Activated CD4-positive, alpha-beta T cell treated with anti-CD3 and anti-CD28 coated beads for 36 hours (primary cell): ENCODE measurements at regions of chr10 and their contacts with region 1.

Region 1: DNA sequence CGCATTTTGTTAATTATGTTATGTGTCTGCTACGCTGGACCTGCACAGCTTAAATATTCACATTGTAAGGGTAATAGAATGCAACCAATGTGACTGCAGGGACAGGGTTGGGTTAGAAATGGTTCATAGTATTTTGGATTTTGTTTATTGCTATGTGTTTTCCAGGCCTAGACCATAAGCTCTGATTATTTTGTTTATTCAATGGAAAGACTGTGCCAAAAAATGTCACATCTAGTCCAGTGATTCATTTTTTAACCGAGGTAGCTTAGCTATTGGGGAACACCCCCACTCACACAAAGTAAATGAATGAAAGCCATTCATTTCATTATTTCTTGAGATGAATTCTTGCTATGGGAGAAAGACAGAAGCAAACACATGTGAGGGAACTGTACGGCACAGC is 516.5 kb upstream of the ANKRD30A start:
- DNase-seq: no peak
- ATAC-seq: no peak
- H3K4me3 Mint-ChIP-seq: no peak overlapping the region
- H3K27ac Mint-ChIP-seq: no peak overlapping the region
- H3K4me1 Mint-ChIP-seq: no peaks in the 10 kb centered on the region
- H3K27me3 Mint-ChIP-seq: no peaks in the 10 kb centered on the region

Region 2: DNA sequence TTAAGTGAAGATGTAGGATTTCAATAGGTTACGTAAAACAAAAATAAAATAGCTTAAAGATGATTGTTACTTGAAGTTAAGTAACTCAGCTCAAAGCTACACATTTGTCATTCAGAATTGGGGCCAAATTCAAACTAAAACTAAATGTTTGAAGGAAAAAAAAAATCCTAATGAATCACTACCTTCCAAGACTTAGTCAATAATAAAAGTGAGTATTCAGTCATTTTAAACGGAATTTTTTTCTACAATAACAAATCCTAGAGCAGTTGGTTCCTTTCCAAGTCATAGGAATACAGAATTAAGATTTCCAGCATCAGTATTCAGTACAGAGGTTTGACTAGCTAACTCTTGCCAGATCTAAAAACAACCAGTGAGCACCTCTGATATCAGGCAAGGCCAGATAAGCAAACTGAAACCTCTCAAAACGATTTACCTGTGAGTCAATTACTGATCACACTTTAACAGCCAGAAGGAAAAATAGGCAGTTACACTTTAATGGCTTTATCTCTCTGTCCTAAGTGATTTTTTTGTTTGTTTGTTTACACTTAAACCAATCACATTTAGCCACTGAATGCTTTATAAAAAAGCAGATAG is 153.2 kb before region 1 on chr10:
- CTCF ChIA-PET with region 1: no interaction called
- POLR2A ChIA-PET with region 1: no interaction called
- intact Hi-C with region 1: no loop called
- DNase-seq: no peak
- ATAC-seq: no peak
- H3K4me3 Mint-ChIP-seq: no peak overlapping the region
- H3K27ac Mint-ChIP-seq: no peak overlapping the region
- H3K4me1 Mint-ChIP-seq: no peaks in the 10 kb centered on the region
- H3K27me3 Mint-ChIP-seq: no peaks in the 10 kb centered on the region

Region 3: DNA sequence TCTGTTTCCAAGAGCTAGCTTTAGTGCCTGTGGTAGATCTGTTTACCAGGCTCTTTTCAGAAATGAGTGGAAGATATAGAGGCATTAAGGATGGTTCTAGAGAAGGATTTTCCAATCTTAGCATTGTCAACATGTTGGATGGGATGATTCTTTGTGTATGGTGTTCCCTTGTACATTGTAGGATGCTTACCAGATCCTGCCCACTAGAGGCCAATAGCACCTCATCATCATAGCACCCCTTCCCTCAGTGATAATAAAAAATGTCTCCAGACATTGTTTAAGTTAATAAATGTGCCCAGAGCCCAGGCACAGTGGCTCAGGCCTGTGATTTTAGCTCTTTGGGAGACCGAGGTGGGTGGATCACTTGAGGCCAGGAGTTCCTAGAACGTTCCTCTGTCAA is 637.8 kb after region 1 on chr10:
- CTCF ChIA-PET with region 1: no interaction called
- POLR2A ChIA-PET with region 1: interaction called, 10 read pairs
- intact Hi-C with region 1: no loop called
- DNase-seq: no peak
- ATAC-seq: no peak
- H3K4me3 Mint-ChIP-seq: no peak overlapping the region
- H3K27ac Mint-ChIP-seq: no peak overlapping the region
- H3K4me1 Mint-ChIP-seq: no peaks in the 10 kb centered on the region
- H3K27me3 Mint-ChIP-seq: no peaks in the 10 kb centered on the region